Endothelial cell of umbilical vein (primary cell): ENCODE measurements at regions of chr4 and their contacts with region 1.

Region 1: DNA sequence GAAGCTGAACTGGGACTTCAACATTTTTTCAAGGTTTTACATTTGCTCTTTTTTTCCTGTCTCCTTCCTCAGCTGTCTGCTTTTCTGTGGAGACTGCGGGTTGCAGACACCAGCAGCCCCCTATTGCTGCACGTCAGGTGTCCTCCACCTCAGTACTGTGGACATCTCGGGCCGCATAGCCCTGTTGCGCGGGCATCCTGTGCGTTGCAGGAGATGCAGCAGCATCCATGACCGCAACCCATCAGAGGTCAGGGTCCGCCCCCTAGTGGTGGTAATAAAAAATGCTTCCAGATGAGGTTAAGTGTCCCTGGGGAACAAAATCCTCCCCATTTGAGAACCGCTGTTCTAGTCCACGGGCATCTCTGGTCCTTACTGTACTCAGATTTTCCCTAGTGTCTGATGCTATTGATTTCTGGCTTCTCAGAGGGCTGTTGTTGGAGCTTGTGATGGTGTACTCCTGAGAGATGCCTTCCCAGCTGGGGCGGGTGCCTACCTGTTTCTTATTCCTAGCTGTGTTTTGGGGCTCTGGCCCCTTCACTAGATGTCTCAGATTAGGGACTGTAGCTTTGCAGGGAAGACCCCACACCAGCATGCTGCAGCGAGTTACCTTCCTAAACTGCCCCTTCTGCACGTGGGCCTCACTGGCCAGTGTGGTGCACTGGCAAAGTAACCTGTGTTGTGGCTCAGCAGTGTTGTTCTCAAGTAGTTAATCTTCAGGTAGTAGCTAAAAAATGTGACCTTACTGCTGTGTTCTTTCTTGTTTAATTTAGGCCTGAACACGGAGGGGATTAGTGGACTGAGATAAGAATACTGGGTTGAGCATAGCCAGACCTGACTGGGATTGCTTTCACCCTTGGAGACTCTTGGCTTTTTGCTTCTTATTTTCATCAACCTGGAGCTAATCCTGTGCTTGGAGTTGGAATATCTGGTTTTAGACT is 28.2 kb downstream of the NSD2 start:
- DNase-seq: peak; percentile 74
- H3K4me3 ChIP-seq: no peak overlapping the region
- H3K27ac ChIP-seq: no peak overlapping the region
- H3K4me1 ChIP-seq: peaks cover 5% of the 10 kb centered on the region
- H3K27me3 ChIP-seq: no peaks in the 10 kb centered on the region
- CTCF ChIP-seq: peak; percentile 79 to 94
- POLR2A ChIP-seq: no peak

Region 2: DNA sequence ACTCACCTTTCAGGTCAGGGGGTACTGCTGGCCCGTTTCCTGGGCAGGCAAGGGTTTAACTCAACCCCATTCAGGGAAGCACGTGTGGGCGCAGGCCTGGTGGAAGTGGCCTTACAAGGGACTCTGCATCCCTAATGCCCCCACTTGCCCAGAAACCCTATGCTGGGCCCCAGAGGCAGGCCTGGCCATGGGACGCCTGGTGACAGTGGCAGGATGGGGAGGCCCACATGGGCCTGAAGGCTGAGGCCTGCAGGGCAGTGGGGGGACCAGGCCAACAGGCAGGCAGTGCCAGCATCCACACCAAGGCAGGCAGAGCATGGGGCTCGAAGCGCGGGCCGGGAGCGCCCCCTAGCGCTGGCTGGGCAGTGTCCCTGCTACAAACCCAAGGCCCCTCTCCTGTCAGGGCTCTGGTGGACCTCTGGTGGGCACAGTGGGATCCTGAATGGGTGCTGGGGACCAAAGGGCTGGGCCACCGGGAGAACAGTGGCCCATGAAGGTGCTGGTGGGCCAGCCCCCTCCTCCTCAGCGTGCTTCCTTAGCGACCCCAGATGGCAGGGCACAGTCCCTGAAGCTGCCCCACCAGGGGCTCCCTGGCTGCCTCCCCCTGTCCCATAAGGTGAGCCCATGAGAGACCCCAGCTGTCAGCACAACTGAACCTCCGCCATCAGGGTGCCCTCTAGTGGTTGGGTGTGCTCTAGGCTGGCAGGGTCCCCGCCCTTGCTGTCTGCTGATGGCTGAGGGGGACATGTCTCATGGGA is 89.5 kb before region 1 on chr4:
- CTCF ChIA-PET with region 1: interaction called, 10 read pairs
- POLR2A ChIA-PET with region 1: no interaction called
- dilution Hi-C with region 1: no loop called
- intact Hi-C with region 1: loop called (anchors 2 kb)
- DNase-seq: peak; percentile 66
- H3K4me3 ChIP-seq: no peak overlapping the region
- H3K27ac ChIP-seq: no peak overlapping the region
- H3K4me1 ChIP-seq: no peaks in the 10 kb centered on the region
- H3K27me3 ChIP-seq: no peaks in the 10 kb centered on the region
- CTCF ChIP-seq: peak; percentile 97 to 99
- POLR2A ChIP-seq: no peak

Region 3: GRCh38 chr4:1856042-1856788 is 43.2 kb before region 1 on chr4 and contains the start of gene LETM1:
- CTCF ChIA-PET with region 1: interaction called, 25 read pairs
- POLR2A ChIA-PET with region 1: no interaction called
- dilution Hi-C with region 1: no loop called
- intact Hi-C with region 1: loop called (anchors 2 kb)
- DNase-seq: peak; percentile 90
- H3K4me3 ChIP-seq: peak within 1 kb of the TSS; percentile 44 to 88 (median 83)
- H3K27ac ChIP-seq: peak within 1 kb of the TSS; percentile 28
- H3K4me1 ChIP-seq: peaks cover 17% of the 10 kb centered on the region
- H3K27me3 ChIP-seq: no peaks in the 10 kb centered on the region
- CTCF ChIP-seq: peak; percentile 8 to 20
- POLR2A ChIP-seq: peak; percentile 66
- total RNA-seq, gene LETM1: 58.3 and 62.5 TPM in 2 replicates

Region 4: DNA sequence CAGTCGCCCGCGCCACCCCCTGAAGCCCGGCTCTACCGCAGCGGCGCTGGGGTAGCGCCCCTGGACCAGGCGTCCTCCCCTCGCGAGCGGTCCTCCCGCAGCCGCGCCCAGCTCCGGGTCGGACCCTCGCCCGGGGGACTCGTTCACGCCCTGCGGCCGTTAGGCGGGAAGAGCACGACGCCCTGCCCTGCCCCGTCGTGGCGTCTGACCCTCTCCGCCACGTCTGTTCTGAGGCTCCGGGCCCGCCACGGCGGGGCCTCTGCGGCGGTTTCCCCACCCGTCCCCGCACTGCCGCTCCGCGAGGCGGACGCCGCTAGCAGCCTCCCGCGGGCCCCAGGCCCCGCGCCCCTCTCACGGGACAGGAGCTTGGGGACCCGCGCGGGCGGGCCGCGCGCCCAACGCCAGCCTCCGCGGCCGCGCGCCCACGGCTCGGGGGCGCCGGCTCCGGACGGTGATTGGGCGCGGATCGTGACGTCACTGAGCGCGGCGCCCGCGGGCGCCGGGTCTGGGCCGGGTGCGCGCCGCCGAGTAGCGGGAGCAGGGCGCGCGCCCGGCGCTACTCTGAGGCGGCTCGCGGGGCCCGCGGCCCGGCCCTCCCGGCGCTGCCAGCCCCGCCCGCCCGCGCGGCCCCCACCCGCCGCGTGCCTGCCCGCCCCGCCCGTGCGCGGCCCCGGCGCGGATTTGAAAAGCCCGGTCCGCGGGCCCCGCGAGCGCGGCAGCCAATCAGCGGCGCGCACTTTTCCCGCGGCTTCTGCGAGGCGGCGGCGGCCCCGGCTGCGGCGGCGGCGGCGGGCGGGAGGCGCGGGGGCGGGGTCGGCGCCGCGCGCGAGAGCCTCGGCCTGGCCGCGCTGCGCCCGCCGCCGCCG is 28.6 kb before region 1 on chr4 and contains the start of gene NSD2:
- CTCF ChIA-PET with region 1: interaction called, 28 read pairs
- POLR2A ChIA-PET with region 1: no interaction called
- dilution Hi-C with region 1: no loop called
- intact Hi-C with region 1: loop called (anchors 1 kb)
- DNase-seq: peak; percentile 81
- H3K4me3 ChIP-seq: peak within 1 kb of the TSS; percentile 78 to 95 (median 86)
- H3K27ac ChIP-seq: peak within 1 kb of the TSS; percentile 93
- H3K4me1 ChIP-seq: peaks cover 17% of the 10 kb centered on the region
- H3K27me3 ChIP-seq: peaks cover 0 to 1% of the 10 kb centered on the region in 2 experiments
- CTCF ChIP-seq: no peak
- POLR2A ChIP-seq: peak; percentile 93
- total RNA-seq, gene NSD2: 152 and 171 TPM in 2 replicates